Upper lobe of right lung (tissue), 1 donor: ENCODE measurements at regions of chr2 and their contacts with region 1.

Region 1: GRCh38 chr2:85813982-85814801 is 60.4 kb downstream of the ATOH8 start:
- DNase-seq: peak; percentile 96
- ATAC-seq: peak; percentile 96
- H3K4me3 ChIP-seq: no peak overlapping the region
- H3K27ac ChIP-seq: no peak overlapping the region
- H3K4me1 ChIP-seq: peaks cover 24% of the 10 kb centered on the region
- H3K27me3 ChIP-seq: no peaks in the 10 kb centered on the region
- CTCF ChIP-seq: peak; percentile 94

Region 2: DNA sequence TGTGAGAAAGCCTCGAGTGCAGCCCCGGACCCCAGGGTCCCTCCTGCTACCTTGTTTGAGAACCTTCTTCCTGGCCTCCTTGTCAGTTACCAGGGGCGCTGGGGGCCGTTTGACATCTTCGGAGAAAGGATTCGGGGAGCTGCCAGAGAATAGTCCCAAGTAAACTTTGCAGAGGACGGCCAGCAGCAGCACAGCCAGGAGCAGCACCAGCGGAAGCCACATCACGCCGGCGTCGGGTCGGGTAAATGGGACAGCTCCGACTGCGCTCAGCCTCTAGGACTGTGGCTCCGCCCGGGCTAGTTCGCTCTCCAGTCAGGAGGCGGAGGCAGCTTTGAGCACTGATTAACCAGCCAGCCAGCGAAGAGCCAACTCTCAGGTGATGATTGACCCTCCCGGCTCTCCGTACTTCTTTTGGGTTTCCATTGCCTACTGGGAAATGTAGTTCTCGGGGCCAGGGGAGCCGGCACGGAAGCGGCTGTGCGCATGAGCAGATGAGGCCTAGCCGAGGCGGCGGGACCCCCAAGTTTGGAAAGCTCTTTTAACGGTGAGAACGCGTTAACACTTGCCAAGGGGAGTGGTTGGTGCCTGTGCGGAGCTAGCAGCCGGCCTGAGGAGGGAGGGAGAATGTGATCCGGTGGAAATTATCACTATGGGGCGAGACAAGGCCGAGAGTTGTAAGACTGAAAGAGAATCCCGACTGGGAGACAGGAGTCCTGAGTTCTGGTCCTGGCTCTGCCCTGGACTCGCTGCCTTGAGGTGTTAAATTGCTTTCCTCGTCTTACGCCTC is 459.7 kb before region 1 on chr2 and contains the starts of genes ELMOD3 and RETSAT:
- intact Hi-C with region 1: no loop called
- DNase-seq: peak; percentile 97
- ATAC-seq: peak; percentile 98
- H3K4me3 ChIP-seq: peak within 1 kb of the TSS; percentile 87
- H3K27ac ChIP-seq: peak within 1 kb of the TSS; percentile 94
- H3K4me1 ChIP-seq: peaks cover 26% of the 10 kb centered on the region
- H3K27me3 ChIP-seq: no peaks in the 10 kb centered on the region
- CTCF ChIP-seq: no peak
- total RNA-seq, gene ELMOD3: 22.0 TPM
- total RNA-seq, gene RETSAT: 58.1 TPM

Region 3: DNA sequence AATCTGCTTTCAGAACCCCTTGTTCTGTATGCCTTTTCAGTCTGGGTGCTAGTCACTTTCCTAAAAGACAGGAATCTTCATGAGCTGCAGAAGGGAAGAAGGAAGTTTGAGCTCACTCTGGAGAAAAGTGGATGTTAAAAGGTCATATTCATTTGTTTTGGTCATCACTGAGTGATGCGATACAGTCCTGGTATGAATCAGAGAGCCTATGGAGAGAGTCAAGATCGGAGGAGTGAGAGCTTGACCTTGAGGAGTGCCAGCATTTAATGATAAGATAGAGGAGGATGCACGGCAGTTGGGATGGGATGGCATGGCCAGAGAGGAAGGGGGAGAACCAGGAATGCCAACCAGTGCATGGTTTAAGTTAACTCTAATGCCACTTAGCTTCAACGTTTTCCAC is 178.6 kb before region 1 on chr2:
- intact Hi-C with region 1: loop called (anchors 10 kb)
- DNase-seq: no peak
- ATAC-seq: no peak
- H3K4me3 ChIP-seq: no peak overlapping the region
- H3K27ac ChIP-seq: no peak overlapping the region
- H3K4me1 ChIP-seq: no peaks in the 10 kb centered on the region
- H3K27me3 ChIP-seq: no peaks in the 10 kb centered on the region
- CTCF ChIP-seq: no peak

Region 4: GRCh38 chr2:85728883-85729824 is 85.0 kb before region 1 on chr2:
- intact Hi-C with region 1: loop called (anchors 5 kb)
- DNase-seq: peak; percentile 95
- ATAC-seq: peak; percentile 97
- H3K4me3 ChIP-seq: no peak overlapping the region
- H3K27ac ChIP-seq: peak overlapping the region; percentile 1
- H3K4me1 ChIP-seq: peaks cover 32% of the 10 kb centered on the region
- H3K27me3 ChIP-seq: no peaks in the 10 kb centered on the region
- CTCF ChIP-seq: peak; percentile 95

Region 5: DNA sequence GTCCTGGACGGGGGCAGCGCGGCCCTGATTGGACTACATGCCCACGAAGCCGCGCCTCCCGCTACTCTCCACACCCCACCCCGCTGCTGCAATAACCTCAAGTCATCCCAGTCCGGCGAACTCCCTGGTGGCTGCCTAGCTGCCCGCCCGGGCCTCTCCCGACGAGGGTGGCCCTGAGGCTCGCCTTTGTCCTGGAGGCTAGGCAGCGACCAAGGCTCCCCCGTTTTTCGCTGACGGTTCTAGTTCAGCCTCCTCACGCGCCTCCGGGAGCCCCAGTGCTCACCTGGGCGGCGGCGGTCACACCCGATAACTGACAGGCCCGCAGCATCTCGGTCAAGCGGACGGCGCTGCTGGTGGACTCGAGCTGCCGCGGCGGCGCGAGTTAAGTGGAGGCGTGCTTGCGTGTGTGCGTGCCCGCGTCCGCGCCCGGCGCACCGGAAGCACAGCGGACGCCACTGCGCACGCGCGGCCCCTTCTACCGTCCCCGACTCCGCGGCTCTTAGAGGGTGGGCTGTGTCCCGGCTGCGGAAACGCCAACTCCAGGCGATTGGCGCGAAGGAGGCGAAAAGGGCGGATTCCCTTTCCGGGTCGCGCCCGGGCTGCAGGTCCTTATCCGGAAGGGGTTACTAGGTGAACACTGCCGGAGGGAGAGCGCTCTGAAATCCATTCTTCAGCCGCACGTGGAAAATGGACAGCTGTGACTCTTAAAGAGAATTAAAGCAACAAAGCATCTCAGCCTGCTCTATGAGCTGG is 381.0 kb after region 1 on chr2 and contains the start of gene IMMT:
- intact Hi-C with region 1: no loop called
- DNase-seq: peak; percentile 98
- ATAC-seq: peak; percentile 95
- H3K4me3 ChIP-seq: peak within 1 kb of the TSS; percentile 94
- H3K27ac ChIP-seq: peak within 1 kb of the TSS; percentile 98
- H3K4me1 ChIP-seq: peaks cover 25% of the 10 kb centered on the region
- H3K27me3 ChIP-seq: no peaks in the 10 kb centered on the region
- CTCF ChIP-seq: no peak
- total RNA-seq, gene IMMT: 54.9 TPM